CD4-positive, alpha-beta T cell (primary cell): ENCODE measurements at regions of chr2 and their contacts with region 1.

Region 1: GRCh38 chr2:9813312-9814133 is 29.8 kb upstream of the TAF1B start:
- DNase-seq: peak; percentile 40 to 82 (median 60)
- ATAC-seq: peak; percentile 83
- H3K4me3 ChIP-seq: no peak overlapping the region
- H3K4me3 Mint-ChIP-seq: no peak overlapping the region
- H3K27ac ChIP-seq: no peak overlapping the region
- H3K27ac Mint-ChIP-seq: no peak overlapping the region
- H3K4me1 ChIP-seq: peaks cover 10% of the 10 kb centered on the region
- H3K4me1 Mint-ChIP-seq: peaks cover 25% of the 10 kb centered on the region
- H3K27me3 ChIP-seq: no peaks in the 10 kb centered on the region
- H3K27me3 Mint-ChIP-seq: peaks cover 4% of the 10 kb centered on the region
- CTCF ChIP-seq: peak; percentile 86

Region 2: GRCh38 chr2:9675415-9676351 is 137.8 kb before region 1 on chr2:
- CTCF ChIA-PET with region 1: no interaction called
- POLR2A ChIA-PET with region 1: no interaction called
- intact Hi-C with region 1: no loop called
- DNase-seq: no peak
- ATAC-seq: no peak
- H3K4me3 ChIP-seq: no peak overlapping the region
- H3K4me3 Mint-ChIP-seq: no peak overlapping the region
- H3K27ac ChIP-seq: no peak overlapping the region
- H3K27ac Mint-ChIP-seq: no peak overlapping the region
- H3K4me1 ChIP-seq: peaks cover 8% of the 10 kb centered on the region
- H3K4me1 Mint-ChIP-seq: no peaks in the 10 kb centered on the region
- H3K27me3 ChIP-seq: no peaks in the 10 kb centered on the region
- H3K27me3 Mint-ChIP-seq: no peaks in the 10 kb centered on the region
- CTCF ChIP-seq: no peak

Region 3: DNA sequence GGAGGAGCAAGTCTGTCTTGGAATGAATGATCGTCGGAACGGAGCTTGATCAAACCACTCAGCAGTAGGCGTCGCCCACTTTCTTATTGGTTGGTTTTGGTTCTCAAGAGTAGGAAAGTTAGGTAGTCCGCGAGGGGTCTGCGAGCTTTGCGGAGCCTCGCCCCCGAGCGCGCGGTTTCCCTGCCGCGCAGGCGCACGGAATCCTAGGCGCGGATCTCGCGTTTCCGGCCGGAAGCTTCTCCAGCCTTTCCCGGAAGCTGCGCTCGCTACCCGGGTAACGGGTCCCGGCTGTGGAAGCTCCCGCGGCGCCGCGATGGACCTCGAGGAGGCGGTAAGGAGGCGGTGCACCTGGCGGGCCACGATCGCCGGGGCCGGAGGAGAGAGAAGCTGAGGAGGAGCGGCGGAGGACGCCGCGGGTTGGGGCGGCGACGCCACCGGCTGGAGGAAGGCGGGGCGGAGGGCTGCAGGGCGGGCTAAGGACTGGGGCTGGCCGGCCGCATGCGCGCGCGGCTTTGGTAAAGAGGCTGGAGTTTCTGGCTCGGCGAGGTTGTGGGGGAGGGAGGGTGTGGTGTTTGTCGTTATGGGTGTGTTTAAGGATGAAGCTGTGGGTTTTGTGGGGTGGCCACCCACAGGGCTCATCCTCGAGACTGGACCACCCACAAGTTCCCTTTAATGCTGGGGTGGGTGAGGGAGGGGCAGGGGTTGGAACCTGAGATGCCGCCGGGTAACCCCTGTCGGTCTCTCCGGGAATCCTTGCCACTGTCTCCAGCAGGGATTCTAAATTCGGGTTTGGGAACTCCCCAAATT is 29.9 kb after region 1 on chr2 and contains the start of gene TAF1B:
- CTCF ChIA-PET with region 1: interaction called, 10 read pairs
- POLR2A ChIA-PET with region 1: interaction called, 3 read pairs
- intact Hi-C with region 1: no loop called
- DNase-seq: peak; percentile 55 to 93 (median 76)
- ATAC-seq: peak; percentile 82
- H3K4me3 ChIP-seq: peak within 1 kb of the TSS; percentile 93
- H3K4me3 Mint-ChIP-seq: peak within 1 kb of the TSS; percentile 93
- H3K27ac ChIP-seq: peak within 1 kb of the TSS; percentile 66 to 75
- H3K27ac Mint-ChIP-seq: peak within 1 kb of the TSS; percentile 90
- H3K4me1 ChIP-seq: peaks cover 19% of the 10 kb centered on the region
- H3K4me1 Mint-ChIP-seq: peaks cover 50% of the 10 kb centered on the region
- H3K27me3 ChIP-seq: no peaks in the 10 kb centered on the region
- H3K27me3 Mint-ChIP-seq: no peaks in the 10 kb centered on the region
- CTCF ChIP-seq: no peak
- total RNA-seq, gene TAF1B: 9.9 to 10.8 TPM

Region 4: GRCh38 chr2:9984217-9984739 is 170.8 kb after region 1 on chr2:
- CTCF ChIA-PET with region 1: interaction called, 5 read pairs
- POLR2A ChIA-PET with region 1: no interaction called
- intact Hi-C with region 1: loop called in 1 of 2 experiments (anchors 5 kb)
- DNase-seq: peak in 4 of 14 experiments; percentile 24 to 81 (median 71)
- ATAC-seq: peak; percentile 90
- H3K4me3 ChIP-seq: no peak overlapping the region
- H3K4me3 Mint-ChIP-seq: no peak overlapping the region
- H3K27ac ChIP-seq: no peak overlapping the region
- H3K27ac Mint-ChIP-seq: no peak overlapping the region
- H3K4me1 ChIP-seq: peaks cover 7% of the 10 kb centered on the region
- H3K4me1 Mint-ChIP-seq: peaks cover 16% of the 10 kb centered on the region
- H3K27me3 ChIP-seq: no peaks in the 10 kb centered on the region
- H3K27me3 Mint-ChIP-seq: peaks cover 9% of the 10 kb centered on the region
- CTCF ChIP-seq: peak; percentile 83

Region 5: GRCh38 chr2:10204326-10205161 is 391.0 kb after region 1 on chr2:
- CTCF ChIA-PET with region 1: no interaction called
- POLR2A ChIA-PET with region 1: no interaction called
- intact Hi-C with region 1: no loop called
- DNase-seq: no peak
- ATAC-seq: no peak
- H3K4me3 ChIP-seq: no peak overlapping the region
- H3K4me3 Mint-ChIP-seq: no peak overlapping the region
- H3K27ac ChIP-seq: no peak overlapping the region
- H3K27ac Mint-ChIP-seq: no peak overlapping the region
- H3K4me1 ChIP-seq: no peaks in the 10 kb centered on the region
- H3K4me1 Mint-ChIP-seq: no peaks in the 10 kb centered on the region
- H3K27me3 ChIP-seq: no peaks in the 10 kb centered on the region
- H3K27me3 Mint-ChIP-seq: no peaks in the 10 kb centered on the region
- CTCF ChIP-seq: no peak

Region 6: GRCh38 chr2:10530607-10531239 is 717.2 kb after region 1 on chr2:
- CTCF ChIA-PET with region 1: no interaction called
- POLR2A ChIA-PET with region 1: no interaction called
- intact Hi-C with region 1: no loop called
- DNase-seq: no peak
- ATAC-seq: no peak
- H3K4me3 ChIP-seq: no peak overlapping the region
- H3K4me3 Mint-ChIP-seq: no peak overlapping the region
- H3K27ac ChIP-seq: no peak overlapping the region
- H3K27ac Mint-ChIP-seq: no peak overlapping the region
- H3K4me1 ChIP-seq: no peaks in the 10 kb centered on the region
- H3K4me1 Mint-ChIP-seq: no peaks in the 10 kb centered on the region
- H3K27me3 ChIP-seq: peaks cover 0 to 2% of the 10 kb centered on the region in 2 experiments
- H3K27me3 Mint-ChIP-seq: no peaks in the 10 kb centered on the region
- CTCF ChIP-seq: no peak

Region 7: DNA sequence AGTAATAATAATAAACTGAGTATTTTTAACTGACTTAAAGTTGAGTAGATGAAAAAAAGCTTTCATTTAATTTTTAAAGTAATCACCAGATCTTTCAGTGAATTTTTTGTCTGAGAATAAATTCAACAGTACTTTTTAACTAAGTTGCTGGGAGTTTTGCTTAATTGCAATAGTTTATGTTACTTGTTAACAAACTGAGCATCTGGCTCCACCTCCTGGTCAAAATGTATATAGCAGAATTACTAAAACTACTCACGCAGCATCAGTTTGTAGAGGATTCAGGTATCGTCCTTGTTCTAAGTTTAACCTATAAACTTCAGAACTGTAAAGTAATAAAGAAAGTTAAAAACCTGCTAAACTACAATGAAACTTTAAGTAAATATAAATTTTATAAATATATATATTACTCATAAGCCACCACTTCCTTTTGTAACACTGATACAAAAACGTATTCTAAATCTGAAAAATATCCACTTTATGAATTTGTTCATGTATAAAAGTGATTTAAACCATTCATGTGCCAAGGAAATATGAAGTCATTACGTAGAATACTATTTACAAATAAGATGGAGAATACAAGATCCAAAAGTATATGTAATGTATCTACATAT is 855.0 kb after region 1 on chr2:
- CTCF ChIA-PET with region 1: no interaction called
- POLR2A ChIA-PET with region 1: no interaction called
- intact Hi-C with region 1: loop called in 1 of 2 experiments (anchors 1 kb)
- DNase-seq: peak in 5 of 14 experiments; percentile 14 to 82 (median 72)
- ATAC-seq: peak; percentile 71
- H3K4me3 ChIP-seq: no peak overlapping the region
- H3K4me3 Mint-ChIP-seq: no peak overlapping the region
- H3K27ac ChIP-seq: no peak overlapping the region
- H3K27ac Mint-ChIP-seq: no peak overlapping the region
- H3K4me1 ChIP-seq: no peaks in the 10 kb centered on the region
- H3K4me1 Mint-ChIP-seq: peaks cover 6% of the 10 kb centered on the region
- H3K27me3 ChIP-seq: no peaks in the 10 kb centered on the region
- H3K27me3 Mint-ChIP-seq: no peaks in the 10 kb centered on the region
- CTCF ChIP-seq: peak; percentile 89